ENCODE measurements at regions of chr3 and their contacts with region 1.

Region 1: DNA sequence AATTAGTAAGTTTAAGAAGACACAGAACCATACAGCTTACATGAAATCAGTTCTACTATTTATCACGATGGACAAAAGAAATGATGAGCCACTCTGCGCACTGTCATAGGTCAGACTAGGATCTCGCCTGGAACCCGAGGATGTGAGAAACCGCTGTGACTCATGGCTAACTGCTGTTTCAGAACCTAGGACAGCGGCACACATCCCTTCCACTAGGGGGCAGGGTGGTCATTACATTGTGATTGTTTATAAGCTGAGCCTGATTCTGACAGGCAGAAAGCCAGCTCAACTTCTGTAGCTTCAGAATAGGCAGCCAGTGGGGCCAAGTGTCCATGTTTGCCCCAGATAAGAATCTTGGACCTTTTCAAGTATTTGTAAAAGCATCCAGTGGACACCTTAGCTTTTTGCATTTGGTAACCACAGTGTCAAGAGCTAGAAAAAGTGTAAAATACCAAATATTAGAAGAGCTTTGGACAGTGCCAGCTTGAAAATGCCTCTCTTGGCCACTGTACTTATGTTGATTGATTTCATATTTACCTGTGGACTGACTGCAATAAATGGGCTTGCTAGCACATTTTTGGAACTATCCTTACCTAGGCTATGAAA is 115.8 kb downstream of the KBTBD8 start:
- DNase-seq: peak; percentile 48
- H3K4me3 ChIP-seq: no peak overlapping the region
- H3K27ac ChIP-seq: no peak overlapping the region
- H3K4me1 ChIP-seq: no peaks in the 10 kb centered on the region
- H3K27me3 ChIP-seq: no peaks in the 10 kb centered on the region
- CTCF ChIP-seq: peak; percentile 96
- EP300 ChIP-seq: no peak
- RAD21 ChIP-seq: peak; percentile 81

Region 2: DNA sequence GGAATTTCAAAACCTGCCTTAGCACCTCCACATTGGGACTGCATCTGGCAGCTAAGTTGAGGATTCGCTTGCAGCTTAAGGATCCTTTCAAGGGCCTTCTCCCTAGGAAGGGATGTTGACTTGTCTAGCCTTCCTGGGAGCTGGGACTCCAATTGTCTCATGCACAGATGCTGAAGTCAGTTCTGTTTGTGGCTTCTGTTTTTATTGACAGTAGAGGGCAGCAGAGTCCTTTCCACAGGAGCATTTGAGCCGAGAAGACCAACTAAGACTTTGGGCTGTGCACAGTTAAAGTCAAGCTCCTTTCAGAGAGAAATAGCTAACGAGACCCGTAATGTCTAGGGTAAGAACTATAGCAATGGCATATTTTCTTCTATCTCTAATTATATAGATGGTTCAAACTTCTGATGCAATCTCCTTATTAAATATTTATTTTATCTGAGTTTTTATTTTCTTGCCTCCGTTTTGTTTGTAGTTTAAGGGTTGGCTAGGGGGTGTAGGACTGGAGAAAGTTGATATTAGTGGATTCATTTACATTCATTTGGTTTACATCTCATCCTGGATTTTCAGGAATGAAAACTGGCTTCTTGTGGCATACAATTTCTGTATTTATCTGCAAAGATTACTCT is 175.5 kb before region 1 on chr3:
- CTCF ChIA-PET with region 1: interaction called, 12 read pairs
- POLR2A ChIA-PET with region 1: no interaction called
- DNase-seq: peak; percentile 36
- H3K4me3 ChIP-seq: no peak overlapping the region
- H3K27ac ChIP-seq: no peak overlapping the region
- H3K4me1 ChIP-seq: no peaks in the 10 kb centered on the region
- H3K27me3 ChIP-seq: no peaks in the 10 kb centered on the region
- CTCF ChIP-seq: peak; percentile 74
- EP300 ChIP-seq: no peak
- RAD21 ChIP-seq: peak; percentile 80

Region 3: GRCh38 chr3:67094774-67095173 is 19.1 kb before region 1 on chr3:
- CTCF ChIA-PET with region 1: interaction called, 11 read pairs
- POLR2A ChIA-PET with region 1: no interaction called
- DNase-seq: no peak
- H3K4me3 ChIP-seq: no peak overlapping the region
- H3K27ac ChIP-seq: no peak overlapping the region
- H3K4me1 ChIP-seq: no peaks in the 10 kb centered on the region
- H3K27me3 ChIP-seq: no peaks in the 10 kb centered on the region
- CTCF ChIP-seq: no peak
- EP300 ChIP-seq: no peak
- RAD21 ChIP-seq: no peak

Region 4: DNA sequence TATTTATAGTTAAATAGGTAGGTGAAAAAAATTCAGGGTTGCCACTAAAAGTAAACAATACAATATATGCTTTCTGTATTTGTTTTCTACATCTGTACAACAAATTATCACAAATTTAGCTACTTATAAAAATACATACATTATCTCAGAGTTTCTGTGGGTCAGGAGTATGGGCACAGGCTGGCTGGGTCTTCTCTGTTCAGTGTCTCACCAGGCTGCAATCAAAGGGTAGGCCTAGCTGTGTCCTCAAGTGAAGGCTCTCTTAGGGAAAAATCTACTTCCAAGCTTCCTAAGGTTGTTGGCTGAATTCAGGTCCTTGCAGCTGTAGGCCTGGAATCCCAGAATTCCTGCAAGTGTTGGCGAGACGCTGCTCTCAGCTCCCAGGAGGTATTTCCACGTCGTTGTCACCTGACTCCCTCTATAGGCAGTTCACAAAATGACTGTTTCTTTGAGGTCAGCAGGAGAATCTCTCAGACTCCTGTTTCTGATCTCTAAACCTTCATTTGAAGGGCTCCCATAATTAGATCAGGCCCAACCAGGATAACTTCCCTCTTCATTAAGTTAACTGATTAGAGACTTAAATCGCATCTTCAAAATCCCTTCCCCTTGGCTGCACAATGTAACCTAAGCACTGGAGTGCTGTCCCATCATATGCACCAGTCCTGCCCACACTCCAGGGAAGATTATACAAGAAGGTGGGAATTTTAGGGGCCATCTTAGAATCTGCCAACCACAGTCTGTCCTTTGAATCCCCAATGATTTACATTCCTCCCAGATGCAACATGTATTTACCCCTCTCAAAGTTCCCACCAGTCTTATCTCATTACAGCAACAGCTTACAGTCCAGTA is 243.9 kb after region 1 on chr3:
- CTCF ChIA-PET with region 1: interaction called, 25 read pairs
- POLR2A ChIA-PET with region 1: no interaction called
- DNase-seq: peak; percentile 41
- H3K4me3 ChIP-seq: no peak overlapping the region
- H3K27ac ChIP-seq: no peak overlapping the region
- H3K4me1 ChIP-seq: no peaks in the 10 kb centered on the region; a peak in 1 of 4 replicates
- H3K27me3 ChIP-seq: no peaks in the 10 kb centered on the region
- CTCF ChIP-seq: peak; percentile 42
- EP300 ChIP-seq: no peak
- RAD21 ChIP-seq: peak; percentile 55

Region 5: DNA sequence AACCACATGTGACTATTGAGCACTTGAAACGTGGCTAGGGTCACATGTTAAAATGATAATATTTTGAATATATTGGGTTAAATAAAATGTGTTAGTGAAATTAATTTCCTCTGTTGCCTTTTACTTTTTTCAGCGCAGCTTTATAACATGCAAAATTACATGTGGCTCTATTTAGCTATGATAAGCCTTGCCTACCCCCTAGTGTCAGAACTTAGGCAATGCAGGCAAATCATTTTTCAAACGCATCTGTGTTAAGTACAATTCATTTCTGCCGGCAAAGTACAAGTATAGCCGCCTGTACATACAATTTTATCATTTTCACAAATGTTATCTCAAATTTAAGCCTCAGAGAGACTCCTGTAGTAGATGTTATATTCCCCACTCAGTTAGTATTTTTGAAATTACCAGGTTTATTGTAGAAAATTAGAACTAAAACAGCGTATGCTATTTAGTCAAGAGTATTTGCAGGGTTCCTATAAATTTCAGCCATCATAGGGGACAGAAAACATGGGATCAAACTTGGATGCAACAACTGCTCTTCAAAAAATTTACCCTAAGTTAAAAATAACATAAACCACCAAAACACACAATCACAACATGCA is 1762.3 kb after region 1 on chr3:
- CTCF ChIA-PET with region 1: interaction called, 47 read pairs
- POLR2A ChIA-PET with region 1: no interaction called
- DNase-seq: peak; percentile 33
- H3K4me3 ChIP-seq: peak overlapping the region in 1 of 2 experiments; percentile 27; a peak in 1 of 4 replicates
- H3K27ac ChIP-seq: no peak overlapping the region
- H3K4me1 ChIP-seq: no peaks in the 10 kb centered on the region
- H3K27me3 ChIP-seq: no peaks in the 10 kb centered on the region
- CTCF ChIP-seq: peak; percentile 95
- EP300 ChIP-seq: no peak
- RAD21 ChIP-seq: peak; percentile 92

Measured in SK-N-SH (cell line).